GM12878 (cell line): ENCODE measurements at regions of chr12 and their contacts with region 1.

Region 1: GRCh38 chr12:27243804-27244683 is at the start of gene STK38L:
- DNase-seq: peak; percentile 86
- ATAC-seq: peak; percentile 90
- H3K4me3 ChIP-seq: peak within 1 kb of the TSS; percentile 86
- H3K27ac ChIP-seq: peak within 1 kb of the TSS; percentile 93
- H3K4me1 ChIP-seq: peaks cover 13% of the 10 kb centered on the region; the same call in 1 of the 2 replicates
- H3K27me3 ChIP-seq: no peaks in the 10 kb centered on the region
- CTCF ChIP-seq: peak; percentile 18 to 38 (median 21); a peak in 4 of 6 replicates
- EP300 ChIP-seq: peak in 1 of 2 experiments; percentile 29; a peak in 1 of 4 replicates
- POLR2A ChIP-seq: peak; percentile 98
- RAD21 ChIP-seq: peak; percentile 46
- polyA plus RNA-seq, gene STK38L: 43.0 to 50.2 TPM

Region 2: GRCh38 chr12:27034607-27035293 is 209.3 kb before region 1 on chr12:
- CTCF ChIA-PET with region 1: no interaction called
- POLR2A ChIA-PET with region 1: no interaction called
- RAD21 ChIA-PET with region 1: no interaction called
- SMC1A ChIA-PET with region 1: no interaction called
- in situ Hi-C with region 1: no loop called
- intact Hi-C with region 1: loop called (anchors 1 kb)
- DNase-seq: no peak
- ATAC-seq: no peak
- H3K4me3 ChIP-seq: no peak overlapping the region
- H3K27ac ChIP-seq: no peak overlapping the region
- H3K4me1 ChIP-seq: no peaks in the 10 kb centered on the region
- H3K27me3 ChIP-seq: no peaks in the 10 kb centered on the region
- CTCF ChIP-seq: no peak
- EP300 ChIP-seq: no peak
- POLR2A ChIP-seq: no peak
- RAD21 ChIP-seq: no peak

Region 3: GRCh38 chr12:27179400-27180214 is 64.4 kb before region 1 on chr12:
- CTCF ChIA-PET with region 1: interaction called, 6 read pairs
- POLR2A ChIA-PET with region 1: interaction called, 10 read pairs
- RAD21 ChIA-PET with region 1: interaction called, 24 read pairs
- SMC1A ChIA-PET with region 1: interaction called, 51 read pairs
- in situ Hi-C with region 1: no loop called
- intact Hi-C with region 1: loop called (anchors 2 kb)
- DNase-seq: peak; percentile 96
- ATAC-seq: peak; percentile 94
- H3K4me3 ChIP-seq: peak overlapping the region; percentile 23
- H3K27ac ChIP-seq: peak overlapping the region; percentile 94
- H3K4me1 ChIP-seq: peaks cover 37% of the 10 kb centered on the region
- H3K27me3 ChIP-seq: no peaks in the 10 kb centered on the region
- CTCF ChIP-seq: no peak
- EP300 ChIP-seq: peak; percentile 27 to 48; a peak in 1 of 4 replicates
- POLR2A ChIP-seq: 0 out of 2 replicates have a peak, but pooled peaks have one; percentile 22
- RAD21 ChIP-seq: no peak

Region 4: DNA sequence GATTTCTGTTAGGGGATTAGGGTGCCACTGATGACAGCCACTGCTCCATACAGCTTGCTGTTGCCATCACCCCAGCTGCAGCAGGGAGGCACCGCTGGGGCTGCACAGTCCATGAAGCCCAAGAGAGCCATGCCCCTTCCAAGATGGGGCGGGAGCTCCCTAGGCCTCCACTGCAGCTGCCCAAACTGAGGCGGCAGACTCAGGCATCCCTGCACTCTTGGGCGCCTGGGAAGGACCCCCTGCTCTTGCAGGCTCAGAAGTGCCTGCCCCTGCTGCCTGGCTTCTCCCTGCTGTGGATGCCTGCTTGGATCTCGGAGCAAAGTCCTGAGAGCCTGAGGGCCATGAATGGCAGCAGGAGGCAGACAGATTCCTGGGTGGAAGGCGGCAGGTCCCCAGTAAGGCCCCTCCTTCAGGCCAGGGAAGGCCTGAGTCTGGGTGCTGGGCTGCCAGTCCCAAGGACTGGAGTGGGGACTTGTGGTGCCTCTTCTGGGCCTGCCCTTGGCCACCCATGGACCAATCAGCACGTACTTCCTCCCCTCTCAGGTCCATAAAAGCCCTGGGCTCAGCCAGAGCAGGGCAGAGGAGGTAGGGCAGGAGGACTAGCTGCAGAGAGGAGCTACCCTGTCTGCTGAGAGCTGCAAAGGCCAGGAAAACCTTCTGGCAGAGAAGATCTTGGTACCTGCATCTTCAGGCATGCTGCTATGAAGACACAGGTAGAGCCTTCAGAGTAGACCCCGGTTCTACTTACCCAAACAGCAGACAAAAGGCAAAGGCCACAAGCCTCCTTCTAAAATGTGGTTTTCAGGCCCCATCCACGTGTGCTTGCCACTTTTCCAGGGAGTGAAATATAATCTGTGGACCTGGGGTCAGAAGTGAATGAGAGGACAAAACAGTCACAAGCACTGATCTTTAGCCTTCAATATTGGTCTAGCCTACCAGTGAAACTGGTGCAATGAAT is 29.9 kb before region 1 on chr12:
- CTCF ChIA-PET with region 1: interaction called, 5 read pairs
- POLR2A ChIA-PET with region 1: interaction called, 36 read pairs
- RAD21 ChIA-PET with region 1: interaction called, 71 read pairs
- SMC1A ChIA-PET with region 1: interaction called, 72 read pairs
- in situ Hi-C with region 1: no loop called
- intact Hi-C with region 1: no loop called
- DNase-seq: no peak
- ATAC-seq: no peak
- H3K4me3 ChIP-seq: no peak overlapping the region
- H3K27ac ChIP-seq: no peak overlapping the region; the same call in 1 of the 2 replicates
- H3K4me1 ChIP-seq: peaks cover 12% of the 10 kb centered on the region
- H3K27me3 ChIP-seq: no peaks in the 10 kb centered on the region
- CTCF ChIP-seq: no peak
- EP300 ChIP-seq: no peak
- POLR2A ChIP-seq: no peak
- RAD21 ChIP-seq: no peak

Region 5: DNA sequence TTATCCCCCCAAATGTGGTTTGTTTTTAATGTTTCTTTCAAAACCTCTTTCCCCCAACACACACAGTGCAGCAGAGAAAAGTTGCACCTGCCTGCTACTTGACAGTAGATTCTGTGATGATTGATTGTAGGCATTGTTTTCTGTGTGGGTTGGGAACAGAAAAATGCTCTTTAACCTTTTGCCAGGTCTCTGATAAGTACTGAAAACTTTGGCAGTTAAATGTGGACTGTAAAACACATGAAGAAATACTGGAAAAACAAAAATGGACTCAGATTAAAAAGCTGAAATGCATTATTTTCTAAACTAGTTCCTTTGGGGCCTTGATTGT is 28.6 kb after region 1 on chr12:
- CTCF ChIA-PET with region 1: interaction called, 5 read pairs
- POLR2A ChIA-PET with region 1: interaction called, 94 read pairs
- RAD21 ChIA-PET with region 1: interaction called, 29 read pairs
- SMC1A ChIA-PET with region 1: interaction called, 491 read pairs
- in situ Hi-C with region 1: no loop called
- intact Hi-C with region 1: no loop called
- DNase-seq: no peak
- ATAC-seq: peak; percentile 69
- H3K4me3 ChIP-seq: no peak overlapping the region
- H3K27ac ChIP-seq: no peak overlapping the region
- H3K4me1 ChIP-seq: peaks cover 16% of the 10 kb centered on the region
- H3K27me3 ChIP-seq: no peaks in the 10 kb centered on the region
- CTCF ChIP-seq: no peak
- EP300 ChIP-seq: peak in 1 of 2 experiments; percentile 34; a peak in 1 of 4 replicates
- POLR2A ChIP-seq: no peak
- RAD21 ChIP-seq: no peak

Region 6: GRCh38 chr12:27293463-27293862 is 49.4 kb after region 1 on chr12:
- CTCF ChIA-PET with region 1: no interaction called
- POLR2A ChIA-PET with region 1: interaction called, 6 read pairs
- RAD21 ChIA-PET with region 1: interaction called, 14 read pairs
- SMC1A ChIA-PET with region 1: interaction called, 491 read pairs
- in situ Hi-C with region 1: no loop called
- intact Hi-C with region 1: no loop called
- DNase-seq: no peak
- ATAC-seq: no peak
- H3K4me3 ChIP-seq: no peak overlapping the region
- H3K27ac ChIP-seq: no peak overlapping the region
- H3K4me1 ChIP-seq: peaks cover 18% of the 10 kb centered on the region
- H3K27me3 ChIP-seq: no peaks in the 10 kb centered on the region
- CTCF ChIP-seq: no peak
- EP300 ChIP-seq: no peak
- POLR2A ChIP-seq: no peak
- RAD21 ChIP-seq: no peak